Psoas muscle (tissue), 8 donors: ENCODE measurements at regions of chr11 and their contacts with region 1.

Region 1: DNA sequence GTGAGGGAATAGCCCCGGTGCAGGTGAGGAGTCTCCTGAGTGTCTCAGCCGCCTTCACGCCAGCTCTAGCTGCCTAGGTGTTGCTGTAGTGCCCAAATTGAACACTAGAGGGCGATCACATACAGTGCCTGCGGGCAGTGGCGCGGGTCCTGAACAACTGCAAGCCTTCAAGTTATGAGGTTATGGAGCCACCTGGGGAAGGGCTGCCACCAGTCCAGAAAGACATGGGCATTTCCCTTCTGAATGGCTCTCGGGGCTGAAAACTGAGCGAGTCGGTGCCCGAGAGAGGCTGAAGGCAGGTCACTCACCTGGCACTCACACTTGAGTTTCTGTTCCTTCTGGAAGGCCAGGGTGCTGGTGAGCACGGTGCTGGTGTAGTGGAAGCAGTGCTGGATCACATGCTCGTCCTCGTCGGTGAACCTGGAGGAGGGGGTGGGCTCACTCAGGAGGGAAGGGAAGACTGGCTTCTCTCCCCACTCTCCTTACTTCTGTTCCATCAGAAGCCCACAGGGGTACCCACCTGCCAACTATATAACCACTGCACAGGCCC is 88.4 kb downstream of the PDE2A start:
- DNase-seq: peak in 1 of 2 donors; percentile 70
- ATAC-seq: peak; percentile 68 to 89 (median 84)
- H3K4me3 ChIP-seq: no peak overlapping the region
- H3K27ac ChIP-seq: no peak overlapping the region
- H3K4me1 ChIP-seq: peaks cover 7% of the 10 kb centered on the region
- H3K27me3 ChIP-seq: peaks cover 0 to 34% (median 0%) of the 10 kb centered on the region in 3 donors
- CTCF ChIP-seq: peak; percentile 94

Region 2: DNA sequence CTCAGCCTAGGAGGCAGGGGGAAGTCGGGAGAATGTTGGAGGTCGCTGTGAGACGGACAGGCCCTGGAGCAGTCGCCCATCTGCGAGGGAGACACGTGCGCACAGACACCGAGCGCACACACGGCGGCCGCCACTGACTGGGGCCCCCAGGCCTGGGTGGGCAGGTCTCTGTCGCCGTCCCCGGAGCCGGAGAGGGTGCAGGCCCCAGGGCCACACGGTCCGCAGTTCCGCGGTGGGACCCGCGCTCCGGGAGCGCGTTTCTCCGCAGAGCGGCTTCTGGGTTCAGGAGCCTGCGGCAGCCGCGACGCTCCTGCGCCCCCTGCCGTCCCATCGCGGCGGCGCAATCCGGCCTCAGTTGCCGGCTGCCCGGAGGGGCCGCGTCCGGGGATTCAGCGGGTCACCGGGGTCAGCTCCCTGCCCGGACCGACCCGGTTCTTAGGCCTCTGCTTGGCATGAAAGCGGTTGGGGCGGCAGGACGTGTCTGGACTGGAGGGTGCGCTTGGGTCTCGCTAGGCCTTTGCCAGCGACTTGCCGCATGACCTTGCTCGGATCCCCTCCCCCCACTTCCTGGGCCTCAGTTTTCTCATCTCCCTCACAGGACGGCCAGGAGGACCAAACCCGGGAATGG is 57.2 kb after region 1 on chr11:
- intact Hi-C with region 1: loop called (anchors 1 to 2 kb)
- DNase-seq: peak; percentile 68 to 80
- ATAC-seq: peak; percentile 79 to 91 (median 87)
- H3K4me3 ChIP-seq: peak overlapping the region; percentile 72
- H3K27ac ChIP-seq: peak overlapping the region; percentile 46
- H3K4me1 ChIP-seq: peaks cover 7% of the 10 kb centered on the region
- H3K27me3 ChIP-seq: peaks cover 0 to 17% (median 0%) of the 10 kb centered on the region in 3 donors
- CTCF ChIP-seq: peak; percentile 98

Region 3: GRCh38 chr11:72683782-72684200 is 98.0 kb after region 1 on chr11:
- intact Hi-C with region 1: loop called (anchors 1 to 5 kb)
- DNase-seq: peak; percentile 71 to 82
- ATAC-seq: peak; percentile 61 to 81 (median 74)
- H3K4me3 ChIP-seq: no peak overlapping the region
- H3K27ac ChIP-seq: no peak overlapping the region
- H3K4me1 ChIP-seq: peaks cover 9% of the 10 kb centered on the region
- H3K27me3 ChIP-seq: peaks cover 0 to 5% (median 3%) of the 10 kb centered on the region in 3 donors
- CTCF ChIP-seq: peak; percentile 92

Region 4: GRCh38 chr11:72703267-72704008 is 117.6 kb after region 1 on chr11:
- intact Hi-C with region 1: no loop called
- DNase-seq: peak; percentile 81 to 91
- ATAC-seq: peak; percentile 38 to 75 (median 49)
- H3K4me3 ChIP-seq: peak overlapping the region; percentile 34
- H3K27ac ChIP-seq: peak overlapping the region; percentile 5
- H3K4me1 ChIP-seq: no peaks in the 10 kb centered on the region
- H3K27me3 ChIP-seq: no peaks in the 10 kb centered on the region
- CTCF ChIP-seq: no peak